ENCODE measurements at regions of chr1 and their contacts with region 1.

Region 1: GRCh38 chr1:235999259-235999925 is 65.5 kb downstream of the NID1 start:
- DNase-seq: peak; percentile 80
- H3K4me3 Mint-ChIP-seq: peak overlapping the region; percentile 11
- H3K27ac Mint-ChIP-seq: peak overlapping the region; percentile 88
- H3K4me1 Mint-ChIP-seq: peaks cover 47% of the 10 kb centered on the region
- H3K27me3 Mint-ChIP-seq: no peaks in the 10 kb centered on the region

Region 2: GRCh38 chr1:234271243-234271606 is 1728.2 kb before region 1 on chr1:
- CTCF ChIA-PET with region 1: no interaction called
- intact Hi-C with region 1: loop called (anchors 2 kb)
- DNase-seq: peak; percentile 22
- H3K4me3 Mint-ChIP-seq: no peak overlapping the region
- H3K27ac Mint-ChIP-seq: no peak overlapping the region
- H3K4me1 Mint-ChIP-seq: peaks cover 26% of the 10 kb centered on the region
- H3K27me3 Mint-ChIP-seq: peaks cover 28% of the 10 kb centered on the region

Region 3: DNA sequence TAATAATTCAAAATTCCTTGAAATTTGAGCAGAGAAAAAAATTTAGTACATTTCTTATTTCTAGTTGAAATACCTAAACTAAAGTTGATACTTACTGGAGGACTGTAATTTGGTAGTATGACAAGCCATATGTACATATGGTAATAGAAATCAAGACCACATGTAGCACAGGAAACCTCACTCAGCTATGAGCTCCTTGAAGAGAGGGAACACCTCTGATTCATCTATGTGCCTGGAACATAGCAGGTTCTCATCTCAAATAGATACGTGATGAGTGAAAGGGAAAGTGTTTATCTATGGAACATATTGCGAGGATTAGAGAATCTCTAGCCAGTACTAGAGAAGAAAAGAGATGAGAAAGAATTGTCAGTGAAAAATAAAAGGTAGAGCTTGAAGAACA is 301.9 kb before region 1 on chr1:
- CTCF ChIA-PET with region 1: no interaction called
- intact Hi-C with region 1: loop called (anchors 1 kb)
- DNase-seq: peak; percentile 37
- H3K4me3 Mint-ChIP-seq: no peak overlapping the region
- H3K27ac Mint-ChIP-seq: peak overlapping the region; percentile 82
- H3K4me1 Mint-ChIP-seq: peaks cover 18% of the 10 kb centered on the region
- H3K27me3 Mint-ChIP-seq: no peaks in the 10 kb centered on the region

Region 4: DNA sequence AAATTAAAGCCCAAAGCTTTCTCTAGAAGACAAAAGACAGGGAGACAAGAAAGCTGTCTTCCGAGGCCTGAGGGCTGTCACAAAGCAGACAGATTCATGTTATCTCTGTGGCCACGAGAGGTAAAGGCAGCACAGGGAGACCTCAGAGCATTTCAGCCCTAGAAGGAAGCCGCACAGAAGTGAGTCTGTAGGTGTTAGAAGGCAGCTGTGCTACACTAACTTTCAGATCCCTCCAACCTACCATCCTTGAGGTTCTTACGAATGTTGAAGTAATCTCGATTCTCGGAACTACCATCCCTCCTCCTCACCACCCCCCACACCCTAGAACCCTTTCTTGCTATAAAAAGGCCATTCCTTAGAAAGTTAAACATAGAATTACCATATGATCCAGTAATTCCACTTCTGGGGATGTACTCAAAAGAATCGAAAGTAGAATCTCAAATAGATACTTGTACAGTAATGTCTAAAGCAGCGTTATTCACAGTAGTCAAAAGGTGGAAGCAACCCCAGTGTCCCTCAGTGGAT is 111.2 kb before region 1 on chr1:
- CTCF ChIA-PET with region 1: no interaction called
- intact Hi-C with region 1: loop called (anchors 1 kb)
- DNase-seq: peak; percentile 61
- H3K4me3 Mint-ChIP-seq: peak overlapping the region; percentile 16
- H3K27ac Mint-ChIP-seq: peak overlapping the region; percentile 82
- H3K4me1 Mint-ChIP-seq: peaks cover 41% of the 10 kb centered on the region
- H3K27me3 Mint-ChIP-seq: no peaks in the 10 kb centered on the region

Region 5: GRCh38 chr1:235952950-235953615 is 46.3 kb before region 1 on chr1:
- CTCF ChIA-PET with region 1: interaction called, 4 read pairs
- intact Hi-C with region 1: loop called (anchors 1 kb)
- DNase-seq: peak; percentile 60
- H3K4me3 Mint-ChIP-seq: no peak overlapping the region
- H3K27ac Mint-ChIP-seq: no peak overlapping the region
- H3K4me1 Mint-ChIP-seq: peaks cover 38% of the 10 kb centered on the region
- H3K27me3 Mint-ChIP-seq: no peaks in the 10 kb centered on the region

Region 6: DNA sequence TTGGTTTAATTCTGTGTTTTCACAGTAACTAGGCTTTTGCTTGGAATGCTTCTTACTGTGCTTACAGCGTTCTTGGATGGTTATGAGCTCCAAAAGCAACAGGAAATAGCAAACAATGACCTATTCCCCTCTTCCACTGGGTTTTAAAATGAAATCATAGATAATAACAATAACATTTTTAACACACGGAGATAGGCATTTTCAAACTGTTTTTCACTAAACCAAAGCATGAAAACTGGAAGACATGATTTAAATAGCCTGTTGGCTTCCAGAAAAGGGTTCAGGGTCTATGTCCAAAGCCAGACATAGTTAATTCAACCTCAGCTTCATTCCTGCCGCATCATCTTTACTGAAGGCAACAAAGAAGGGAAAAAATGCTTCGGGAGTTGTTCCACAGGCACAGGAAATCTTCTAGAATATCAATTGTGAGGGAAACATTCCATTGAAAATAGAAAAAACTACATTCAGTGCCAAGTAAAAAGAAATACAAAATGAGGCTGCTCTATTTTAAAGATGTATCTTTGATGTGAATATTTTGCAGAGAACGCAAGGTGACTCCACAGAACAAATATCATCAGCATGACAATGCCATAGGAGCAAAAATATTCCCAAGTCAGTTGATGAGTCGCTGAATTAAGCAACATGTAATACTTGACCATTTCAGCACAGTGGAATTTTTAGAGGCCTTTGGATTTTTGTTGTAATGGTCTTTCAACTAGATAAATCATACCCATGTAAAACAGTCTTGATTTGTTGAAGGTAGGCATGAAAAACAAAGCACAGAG is 15.2 kb before region 1 on chr1:
- CTCF ChIA-PET with region 1: no interaction called
- intact Hi-C with region 1: no loop called
- DNase-seq: no peak
- H3K4me3 Mint-ChIP-seq: no peak overlapping the region
- H3K27ac Mint-ChIP-seq: no peak overlapping the region
- H3K4me1 Mint-ChIP-seq: no peaks in the 10 kb centered on the region
- H3K27me3 Mint-ChIP-seq: no peaks in the 10 kb centered on the region

Region 7: GRCh38 chr1:236120721-236121153 is 121.3 kb after region 1 on chr1:
- CTCF ChIA-PET with region 1: no interaction called
- intact Hi-C with region 1: loop called (anchors 1 kb)
- DNase-seq: peak; percentile 33
- H3K4me3 Mint-ChIP-seq: no peak overlapping the region
- H3K27ac Mint-ChIP-seq: no peak overlapping the region
- H3K4me1 Mint-ChIP-seq: peaks cover 28% of the 10 kb centered on the region
- H3K27me3 Mint-ChIP-seq: no peaks in the 10 kb centered on the region

Region 8: GRCh38 chr1:236206548-236206947 is 207.2 kb after region 1 on chr1:
- CTCF ChIA-PET with region 1: no interaction called
- intact Hi-C with region 1: no loop called
- DNase-seq: no peak
- H3K4me3 Mint-ChIP-seq: no peak overlapping the region
- H3K27ac Mint-ChIP-seq: no peak overlapping the region
- H3K4me1 Mint-ChIP-seq: no peaks in the 10 kb centered on the region
- H3K27me3 Mint-ChIP-seq: no peaks in the 10 kb centered on the region